ENCODE measurements at regions of chrX and their contacts with region 1.

Region 1: GRCh38 chrX:96721354-96721753 is 36.7 kb downstream of the DIAPH2 start:
- DNase-seq: peak; percentile 45
- ATAC-seq: peak; percentile 82
- H3K4me3 ChIP-seq: no peak overlapping the region
- H3K27ac ChIP-seq: peak overlapping the region; percentile 36; the same call in 1 of the 2 replicates
- H3K4me1 ChIP-seq: peaks cover 14% of the 10 kb centered on the region
- H3K27me3 ChIP-seq: no peaks in the 10 kb centered on the region
- CTCF ChIP-seq: no peak

Region 2: GRCh38 chrX:96684339-96685209 is 36.8 kb before region 1 on chrX and contains the start of gene DIAPH2:
- CTCF ChIA-PET with region 1: no interaction called
- POLR2A ChIA-PET with region 1: no interaction called
- intact Hi-C with region 1: loop called (anchors 5 kb)
- DNase-seq: peak; percentile 86
- ATAC-seq: peak; percentile 86
- H3K4me3 ChIP-seq: peak within 1 kb of the TSS; percentile 95
- H3K27ac ChIP-seq: peak within 1 kb of the TSS; percentile 86
- H3K4me1 ChIP-seq: peaks cover 13% of the 10 kb centered on the region
- H3K27me3 ChIP-seq: no peaks in the 10 kb centered on the region
- CTCF ChIP-seq: 0 out of 2 replicates have a peak, but pooled peaks have one; percentile 8
- total RNA-seq, gene DIAPH2: 15.1 and 19.6 TPM in 2 replicates